RWPE1 (cell line): ENCODE measurements at regions of chr16 and their contacts with region 1.

Region 1: DNA sequence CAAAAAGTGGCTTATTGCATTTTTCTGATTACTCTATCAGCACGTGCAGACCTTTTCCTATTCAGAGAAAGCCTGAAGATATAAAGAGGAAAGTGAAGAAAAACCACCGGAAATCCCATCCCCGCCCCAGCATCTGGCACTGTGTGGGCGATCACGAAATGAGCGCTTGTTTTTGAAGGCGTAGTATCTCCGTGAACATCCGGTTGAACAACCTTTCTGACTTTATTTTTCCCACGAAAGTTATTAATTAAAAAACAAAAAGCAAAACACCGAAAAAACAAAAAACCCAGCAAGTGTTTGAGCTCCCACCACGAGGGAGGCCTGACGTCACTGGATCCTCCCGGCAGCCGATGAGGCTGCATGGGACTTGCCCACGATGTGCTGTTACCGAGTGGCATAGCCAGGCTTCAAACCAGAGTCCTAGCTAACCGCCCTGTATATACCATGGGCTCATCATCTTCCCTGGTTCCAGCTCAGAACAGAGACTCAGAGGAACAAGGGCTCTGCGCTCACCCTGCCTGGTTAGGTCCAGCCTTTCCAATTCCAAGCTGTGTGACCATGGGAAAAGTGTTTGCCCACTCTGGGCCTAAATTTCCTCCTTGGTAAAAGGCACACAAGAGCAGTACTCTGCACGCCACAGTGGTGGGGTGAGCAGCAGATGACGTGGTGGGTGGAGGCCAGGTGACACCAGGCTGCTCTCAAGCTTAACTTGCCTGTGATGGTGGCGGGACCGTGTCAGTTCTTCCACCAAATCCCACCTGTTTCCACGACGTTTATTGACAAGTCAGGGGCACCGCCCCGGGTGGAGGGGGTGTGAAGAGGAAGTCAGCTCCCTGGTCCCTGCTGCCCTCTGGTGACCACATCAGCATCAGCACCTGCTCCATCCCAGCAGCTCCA is 34.3 kb upstream of the IL21R start:
- DNase-seq: peak; percentile 89
- H3K27ac ChIP-seq: peak overlapping the region; percentile 14; the same call in 1 of the 2 replicates
- CTCF ChIP-seq: peak; percentile 84

Region 2: GRCh38 chr16:27235055-27235937 is 132.4 kb before region 1 on chr16:
- CTCF ChIA-PET with region 1: interaction called, 40 read pairs
- POLR2A ChIA-PET with region 1: interaction called, 4 read pairs
- DNase-seq: peak; percentile 60
- H3K27ac ChIP-seq: peak overlapping the region; percentile 54
- CTCF ChIP-seq: peak; percentile 91